ENCODE measurements at regions of chr7 and their contacts with region 1.

Region 1: GRCh38 chr7:134646425-134647305 is at the start of gene BPGM:
- DNase-seq: peak; percentile 94 to 99
- H3K4me3 ChIP-seq: peak within 1 kb of the TSS; percentile 72 to 91 (median 86)
- H3K27ac ChIP-seq: no peak within 1 kb of the TSS
- H3K4me1 ChIP-seq: 0 out of 7 replicates have a peak, but pooled peaks cover 0 to 3% (median under 1%) of the 10 kb centered on the region in 4 experiments
- H3K27me3 ChIP-seq: no peaks in the 10 kb centered on the region
- CTCF ChIP-seq: peak; percentile 31 to 45 (median 34); a peak in 3 of 4 replicates
- EP300 ChIP-seq: no peak
- POLR2A ChIP-seq: peak; percentile 96
- RAD21 ChIP-seq: peak in 1 of 2 experiments; percentile 16; a peak in 1 of 4 replicates
- total RNA-seq, gene BPGM: 15.3 and 17.4 TPM in 2 replicates

Region 2: DNA sequence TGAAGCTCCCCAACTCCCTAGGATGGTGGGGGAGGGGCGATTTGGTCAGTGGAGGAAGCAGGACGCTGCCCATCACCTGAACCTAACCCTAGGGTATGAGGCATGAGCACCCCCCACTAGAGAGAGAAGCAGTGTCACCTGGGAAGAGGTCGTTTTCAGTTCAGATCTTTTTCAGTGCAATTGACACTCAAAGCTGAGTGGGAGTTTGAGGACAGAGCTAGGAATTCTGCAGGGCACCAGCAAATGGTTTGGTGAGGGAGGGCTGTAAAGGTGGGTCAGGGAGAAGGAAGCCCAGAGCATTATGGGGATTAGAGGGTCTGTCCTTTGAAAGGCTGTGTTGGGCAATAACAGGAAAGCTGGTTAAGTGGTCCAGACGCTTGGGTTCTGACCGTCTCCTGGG is 10.9 kb after region 1 on chr7:
- CTCF ChIA-PET with region 1: interaction called, 32 read pairs
- POLR2A ChIA-PET with region 1: interaction called, 13 read pairs
- DNase-seq: no peak
- H3K4me3 ChIP-seq: no peak overlapping the region
- H3K27ac ChIP-seq: no peak overlapping the region
- H3K4me1 ChIP-seq: no peaks in the 10 kb centered on the region
- H3K27me3 ChIP-seq: no peaks in the 10 kb centered on the region
- CTCF ChIP-seq: no peak
- EP300 ChIP-seq: no peak
- POLR2A ChIP-seq: no peak
- RAD21 ChIP-seq: no peak

Region 3: GRCh38 chr7:134701272-134701671 is 54.6 kb after region 1 on chr7:
- CTCF ChIA-PET with region 1: interaction called, 19 read pairs
- POLR2A ChIA-PET with region 1: interaction called, 10 read pairs
- DNase-seq: no peak
- H3K4me3 ChIP-seq: no peak overlapping the region
- H3K27ac ChIP-seq: no peak overlapping the region
- H3K4me1 ChIP-seq: peaks cover 0 to 7% (median 4%) of the 10 kb centered on the region in 4 experiments; a peak in 3 of 7 replicates
- H3K27me3 ChIP-seq: no peaks in the 10 kb centered on the region
- CTCF ChIP-seq: peak in 2 of 3 experiments; percentile 61 to 66; a peak in 3 of 4 replicates
- EP300 ChIP-seq: no peak
- POLR2A ChIP-seq: no peak
- RAD21 ChIP-seq: peak; percentile 62 to 71